ENCODE measurements at regions of chr15 and their contacts with region 1.

Region 1: DNA sequence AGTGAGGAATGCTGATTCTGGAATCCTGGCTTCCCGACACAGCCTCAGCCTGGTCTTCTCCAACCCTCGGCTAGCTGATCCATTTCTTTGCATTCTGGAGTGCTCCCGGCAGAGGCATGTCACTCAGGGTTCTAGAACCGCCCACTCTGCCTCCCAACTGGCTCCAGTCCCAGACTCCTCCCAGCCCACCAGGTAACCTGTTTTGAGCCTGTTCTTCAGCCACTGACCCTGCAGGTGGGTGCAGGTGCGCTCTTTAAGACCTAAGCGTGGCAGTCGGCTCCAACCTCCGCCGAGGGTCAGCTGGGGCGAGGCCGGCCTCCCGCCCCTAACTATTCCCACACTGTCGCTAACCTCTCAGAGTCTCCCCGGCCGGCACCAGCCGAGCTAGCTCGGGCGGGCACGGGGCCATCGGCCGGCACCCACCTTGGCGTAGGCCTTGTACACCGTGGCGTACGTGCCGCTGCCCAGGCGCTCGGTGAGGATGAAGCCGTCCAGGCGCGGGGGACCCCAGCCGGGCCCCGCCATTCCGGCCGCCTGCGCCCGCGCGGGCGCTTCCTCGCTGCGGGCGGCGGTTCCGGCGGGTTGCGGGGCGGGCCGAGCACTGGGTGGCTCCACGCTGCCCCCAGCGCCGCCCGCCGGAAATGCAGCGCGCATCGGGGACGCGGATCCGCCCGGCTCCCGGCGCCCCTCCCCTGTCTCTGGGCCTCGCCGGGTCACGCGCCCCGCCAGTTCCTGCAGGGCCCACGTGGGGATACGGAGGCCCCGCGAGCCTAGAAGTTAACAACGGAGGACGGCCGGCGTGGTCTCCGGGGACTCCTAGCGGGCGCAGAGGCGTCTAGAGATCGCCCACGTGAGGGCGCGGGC is at the start of gene ULK3:
- DNase-seq: peak; percentile 91
- H3K4me3 Mint-ChIP-seq: peak within 1 kb of the TSS; percentile 89
- H3K27ac Mint-ChIP-seq: peak within 1 kb of the TSS; percentile 92
- H3K4me1 Mint-ChIP-seq: peaks cover 38% of the 10 kb centered on the region
- H3K27me3 Mint-ChIP-seq: no peaks in the 10 kb centered on the region
- total RNA-seq, gene ULK3: 45.5 and 47.7 TPM in 2 replicates

Region 2: GRCh38 chr15:74682954-74683353 is 159.9 kb before region 1 on chr15:
- intact Hi-C with region 1: no loop called
- DNase-seq: no peak
- H3K4me3 Mint-ChIP-seq: no peak overlapping the region
- H3K27ac Mint-ChIP-seq: no peak overlapping the region
- H3K4me1 Mint-ChIP-seq: peaks cover 4% of the 10 kb centered on the region
- H3K27me3 Mint-ChIP-seq: no peaks in the 10 kb centered on the region

Region 3: DNA sequence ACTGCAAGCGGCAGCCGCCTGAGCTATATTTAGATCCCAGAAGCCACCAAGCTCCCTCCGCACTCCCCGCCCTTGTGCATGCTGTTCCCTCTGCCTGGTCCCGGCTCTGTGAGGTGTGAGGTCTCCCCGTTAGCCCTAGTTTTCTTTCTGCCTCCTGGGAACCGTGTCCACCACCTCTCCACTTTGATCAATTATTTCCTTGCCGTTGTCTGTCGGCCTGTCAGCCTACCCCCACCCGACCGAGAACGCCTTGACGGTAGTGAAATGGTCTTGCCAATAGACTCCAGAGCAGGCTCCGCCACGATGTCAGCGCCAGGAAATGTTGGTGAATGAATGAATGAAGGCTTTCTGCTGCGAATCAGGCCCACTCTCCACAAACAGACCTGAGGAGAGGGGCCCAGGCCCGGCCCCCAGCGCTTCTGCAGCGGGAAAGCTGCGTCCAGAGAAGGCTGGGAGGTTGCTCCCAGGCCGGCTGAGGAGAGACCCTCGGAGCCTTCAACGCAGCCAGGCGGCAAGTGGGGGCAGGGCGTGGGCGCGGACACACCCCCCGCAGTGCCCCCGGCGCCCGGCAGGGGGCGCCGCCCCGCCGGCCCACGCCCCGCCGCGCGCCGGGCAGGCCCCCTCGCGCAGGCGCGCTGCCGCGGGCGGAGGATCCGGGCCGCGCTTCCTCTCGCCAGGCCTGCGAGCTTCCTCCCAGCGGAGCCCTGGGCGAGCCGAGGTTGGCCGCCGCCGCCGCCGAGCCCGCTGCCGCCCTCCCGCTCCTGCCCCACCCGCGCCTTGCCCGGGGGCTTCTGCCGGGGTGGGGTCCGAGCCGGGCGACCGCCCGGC is 61.2 kb before region 1 on chr15 and contains the start of gene CSK:
- intact Hi-C with region 1: loop called (anchors 2 kb)
- DNase-seq: peak; percentile 77
- H3K4me3 Mint-ChIP-seq: peak within 1 kb of the TSS; percentile 97
- H3K27ac Mint-ChIP-seq: peak within 1 kb of the TSS; percentile 99
- H3K4me1 Mint-ChIP-seq: peaks cover 66% of the 10 kb centered on the region
- H3K27me3 Mint-ChIP-seq: no peaks in the 10 kb centered on the region
- total RNA-seq, gene CSK: 261 and 266 TPM in 2 replicates

Region 4: GRCh38 chr15:74873036-74873755 is 30.4 kb after region 1 on chr15 and contains the start of gene SCAMP2:
- intact Hi-C with region 1: loop called (anchors 1 kb)
- DNase-seq: peak; percentile 89
- H3K4me3 Mint-ChIP-seq: peak within 1 kb of the TSS; percentile 98
- H3K27ac Mint-ChIP-seq: peak within 1 kb of the TSS; percentile 89
- H3K4me1 Mint-ChIP-seq: peaks cover 34% of the 10 kb centered on the region
- H3K27me3 Mint-ChIP-seq: peaks cover 1% of the 10 kb centered on the region
- total RNA-seq, gene SCAMP2: 85.0 and 90.6 TPM in 2 replicates

Region 5: DNA sequence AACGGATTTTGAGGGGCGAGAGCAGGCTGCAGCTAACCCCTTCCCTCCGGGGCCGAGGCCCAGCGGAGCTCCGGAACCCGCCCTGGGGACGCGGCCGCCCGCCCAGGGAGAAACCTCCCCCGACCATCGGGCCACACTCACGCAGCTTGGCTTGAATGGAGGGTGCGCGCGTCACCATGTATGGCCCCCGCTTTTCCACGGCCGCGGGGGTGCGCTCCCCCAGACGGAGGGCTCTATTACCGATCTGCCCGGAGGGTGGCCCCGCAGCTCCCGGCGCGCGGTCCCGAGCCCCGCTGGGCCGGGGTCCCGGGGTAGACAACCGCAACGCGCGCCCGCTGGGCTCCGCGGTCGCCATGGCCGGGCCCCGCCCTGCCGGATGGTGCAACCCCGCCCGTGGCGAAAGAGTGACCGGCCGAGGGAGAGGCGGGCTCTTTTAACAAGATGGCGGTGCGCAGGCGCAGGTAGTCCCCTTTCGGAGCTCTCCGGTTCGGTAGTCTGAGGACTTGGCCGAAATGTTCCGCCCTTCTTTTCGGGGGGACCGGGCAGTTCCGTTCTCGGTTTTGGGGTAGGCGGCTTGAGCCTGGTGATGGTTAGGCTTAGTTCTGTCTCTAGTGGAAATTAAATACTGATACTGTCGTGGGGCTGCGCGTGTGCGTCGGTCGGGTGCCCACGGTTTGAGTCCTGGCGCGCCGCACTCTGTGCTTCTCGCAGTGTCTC is 63.8 kb after region 1 on chr15 and contains the start of gene FAM219B:
- intact Hi-C with region 1: loop called (anchors 2 kb)
- DNase-seq: peak; percentile 75
- H3K4me3 Mint-ChIP-seq: peak within 1 kb of the TSS; percentile 91
- H3K27ac Mint-ChIP-seq: peak within 1 kb of the TSS; percentile 88
- H3K4me1 Mint-ChIP-seq: peaks cover 33% of the 10 kb centered on the region
- H3K27me3 Mint-ChIP-seq: no peaks in the 10 kb centered on the region
- total RNA-seq, gene FAM219B: 82.1 and 95.2 TPM in 2 replicates

Region 6: DNA sequence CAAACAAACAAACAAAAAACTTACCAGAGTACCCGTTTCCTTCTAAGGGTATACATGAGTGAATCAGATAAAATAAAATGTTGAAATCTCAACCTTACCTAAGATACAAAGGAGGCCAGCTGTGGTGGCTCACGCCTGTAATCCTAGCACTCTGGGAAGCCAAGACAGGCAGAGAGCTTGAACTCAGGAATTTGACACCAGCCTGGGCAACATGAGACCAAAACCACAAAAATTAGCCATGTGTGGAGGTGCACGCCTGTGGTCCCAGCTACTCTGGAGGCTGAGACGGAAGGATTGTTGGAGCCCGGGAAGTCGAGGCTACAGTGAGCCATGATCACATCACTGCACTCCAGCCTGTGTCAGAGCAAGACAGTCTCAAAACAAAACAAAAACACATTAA is 74.9 kb after region 1 on chr15:
- intact Hi-C with region 1: no loop called
- DNase-seq: no peak
- H3K4me3 Mint-ChIP-seq: no peak overlapping the region
- H3K27ac Mint-ChIP-seq: no peak overlapping the region
- H3K4me1 Mint-ChIP-seq: peaks cover 4% of the 10 kb centered on the region
- H3K27me3 Mint-ChIP-seq: no peaks in the 10 kb centered on the region

Region 7: DNA sequence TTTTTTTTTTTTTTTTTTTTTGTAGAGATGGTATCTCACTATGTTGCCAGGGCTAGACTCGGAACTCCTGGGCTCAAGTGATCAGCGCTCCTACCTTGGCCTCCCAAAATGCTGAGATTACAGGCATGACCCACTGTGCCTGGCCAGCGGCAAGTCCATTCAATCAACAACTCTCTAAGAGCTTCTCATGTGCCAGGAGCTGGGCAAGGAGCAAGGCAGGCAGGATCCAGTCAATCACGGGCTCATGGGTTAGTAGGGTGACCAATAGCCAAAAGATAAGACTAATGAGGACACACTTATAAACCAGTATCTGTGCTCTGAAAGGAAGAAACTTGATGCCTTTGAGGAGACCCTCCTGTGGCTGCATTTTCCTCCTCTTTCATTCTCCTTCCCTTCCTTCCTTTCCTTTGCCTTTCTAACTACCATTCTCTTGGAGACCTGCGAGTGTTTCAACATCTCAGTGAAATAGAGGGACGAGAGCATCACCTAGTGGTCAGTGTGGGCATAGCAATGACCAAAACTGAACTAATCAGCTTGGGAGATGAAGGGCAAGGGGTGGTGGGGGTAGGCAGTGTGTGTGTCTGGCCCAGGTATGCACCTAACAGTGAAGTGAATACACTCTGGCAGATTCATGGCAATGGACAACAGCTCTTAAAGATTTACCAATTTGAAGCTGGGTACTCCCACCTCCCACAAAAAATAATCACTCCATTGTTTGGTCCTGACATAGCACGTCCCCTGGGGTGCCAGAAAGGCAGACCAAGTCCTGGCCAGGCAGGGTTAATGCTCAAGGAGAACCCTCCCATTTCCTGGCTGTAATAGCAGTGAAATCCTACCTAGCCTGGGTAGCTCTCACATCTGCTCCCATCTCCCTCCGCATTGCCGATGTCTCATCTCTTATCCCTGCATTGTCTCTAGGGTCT is 107.5 kb after region 1 on chr15:
- intact Hi-C with region 1: loop called (anchors 2 kb)
- DNase-seq: peak; percentile 71
- H3K4me3 Mint-ChIP-seq: no peak overlapping the region
- H3K27ac Mint-ChIP-seq: no peak overlapping the region
- H3K4me1 Mint-ChIP-seq: peaks cover 10% of the 10 kb centered on the region
- H3K27me3 Mint-ChIP-seq: peaks cover 2% of the 10 kb centered on the region

Measured in activated T-helper 2 cell treated with anti-CD3 and anti-CD28 coated beads, Interferon-gamma antibody, Interleukin-2, Interleukin-4, amounts not matched to agents 10 μg/mL and 5 μg/mL and 100 μg/mL, durations not matched to agents 14 hours and 24 hours and 36 hours (primary cell).